Naive thymus-derived CD8-positive, alpha-beta T cell (primary cell): ENCODE measurements at regions of chr17 and their contacts with region 1.

Region 1: GRCh38 chr17:39209317-39210092 is 9.4 kb downstream of the RPL19 start:
- DNase-seq: peak; percentile 58 to 91 (median 74)
- ATAC-seq: peak; percentile 76 to 78
- H3K4me3 Mint-ChIP-seq: peak overlapping the region; percentile 46 to 75 (median 68)
- H3K27ac Mint-ChIP-seq: peak overlapping the region; percentile 67 to 95 (median 90)
- H3K4me1 Mint-ChIP-seq: peaks cover 19 to 40% (median 38%) of the 10 kb centered on the region in 4 donors
- H3K27me3 Mint-ChIP-seq: no peaks in the 10 kb centered on the region

Region 2: DNA sequence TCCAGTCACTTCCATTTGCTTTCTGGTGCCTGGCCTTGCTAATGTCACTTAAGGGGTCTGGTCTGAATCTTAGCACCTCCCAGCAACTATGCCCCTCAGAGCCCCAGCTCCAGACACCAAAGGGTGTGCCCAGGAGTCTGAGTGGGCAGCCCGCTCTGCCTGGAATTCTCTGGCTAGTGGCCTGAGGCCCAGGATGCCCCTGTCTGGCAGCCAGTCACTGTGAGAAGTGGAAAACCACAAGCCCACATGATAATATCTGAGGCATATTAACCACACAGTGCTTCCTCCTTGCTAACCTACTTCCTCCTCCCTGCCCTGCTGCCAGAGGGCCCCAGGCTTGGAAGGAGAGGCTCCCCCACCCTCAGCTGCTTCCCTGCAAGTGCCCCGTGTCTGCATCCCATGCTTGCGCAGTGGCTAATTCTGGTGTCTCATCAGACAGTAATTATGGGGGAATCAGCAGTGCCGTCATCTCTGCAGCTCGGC is 617.7 kb before region 1 on chr17:
- POLR2A ChIA-PET with region 1: no interaction called
- DNase-seq: no peak
- ATAC-seq: peak in 1 of 2 donors; percentile 33
- H3K4me3 Mint-ChIP-seq: peak overlapping the region in 5 of 10 donors; percentile 3 to 36 (median 29)
- H3K27ac Mint-ChIP-seq: peak overlapping the region in 1 of 10 donors; percentile 53
- H3K4me1 Mint-ChIP-seq: peaks cover 17 to 27% (median 22%) of the 10 kb centered on the region in 4 donors
- H3K27me3 Mint-ChIP-seq: peaks cover 49 to 93% (median 73%) of the 10 kb centered on the region in 5 donors

Region 3: DNA sequence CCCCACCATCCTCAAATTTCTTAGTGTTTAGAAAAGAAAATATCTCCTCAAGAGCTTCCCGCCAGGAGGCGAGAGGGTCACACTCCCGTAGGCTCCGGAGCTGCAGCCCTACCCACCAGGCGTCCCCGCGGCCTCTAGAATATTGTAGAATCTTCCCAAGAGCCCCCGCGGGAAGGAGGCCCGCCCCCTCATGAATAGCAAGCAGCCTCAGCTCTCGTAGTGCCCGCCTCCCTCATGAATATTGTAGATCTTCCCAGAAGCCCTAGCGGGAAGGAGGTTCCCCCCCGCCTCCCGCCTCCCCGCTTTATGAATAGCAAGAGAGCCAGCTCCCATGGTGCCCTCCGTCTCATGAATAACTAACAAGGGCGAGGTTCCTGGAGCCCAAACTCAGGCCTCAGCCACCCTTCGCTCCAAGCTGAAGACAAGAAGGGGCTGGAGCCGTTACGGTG is 242.2 kb before region 1 on chr17 and contains the start of gene FBXO47:
- POLR2A ChIA-PET with region 1: no interaction called
- DNase-seq: peak; percentile 53 to 94 (median 82)
- ATAC-seq: peak; percentile 98 to 99
- H3K4me3 Mint-ChIP-seq: peak within 1 kb of the TSS; percentile 73 to 89 (median 84)
- H3K27ac Mint-ChIP-seq: peak within 1 kb of the TSS; percentile 72 to 96 (median 90)
- H3K4me1 Mint-ChIP-seq: peaks cover 7 to 20% (median 12%) of the 10 kb centered on the region in 4 donors
- H3K27me3 Mint-ChIP-seq: no peaks in the 10 kb centered on the region
- polyA plus RNA-seq, gene FBXO47: not detected

Region 4: DNA sequence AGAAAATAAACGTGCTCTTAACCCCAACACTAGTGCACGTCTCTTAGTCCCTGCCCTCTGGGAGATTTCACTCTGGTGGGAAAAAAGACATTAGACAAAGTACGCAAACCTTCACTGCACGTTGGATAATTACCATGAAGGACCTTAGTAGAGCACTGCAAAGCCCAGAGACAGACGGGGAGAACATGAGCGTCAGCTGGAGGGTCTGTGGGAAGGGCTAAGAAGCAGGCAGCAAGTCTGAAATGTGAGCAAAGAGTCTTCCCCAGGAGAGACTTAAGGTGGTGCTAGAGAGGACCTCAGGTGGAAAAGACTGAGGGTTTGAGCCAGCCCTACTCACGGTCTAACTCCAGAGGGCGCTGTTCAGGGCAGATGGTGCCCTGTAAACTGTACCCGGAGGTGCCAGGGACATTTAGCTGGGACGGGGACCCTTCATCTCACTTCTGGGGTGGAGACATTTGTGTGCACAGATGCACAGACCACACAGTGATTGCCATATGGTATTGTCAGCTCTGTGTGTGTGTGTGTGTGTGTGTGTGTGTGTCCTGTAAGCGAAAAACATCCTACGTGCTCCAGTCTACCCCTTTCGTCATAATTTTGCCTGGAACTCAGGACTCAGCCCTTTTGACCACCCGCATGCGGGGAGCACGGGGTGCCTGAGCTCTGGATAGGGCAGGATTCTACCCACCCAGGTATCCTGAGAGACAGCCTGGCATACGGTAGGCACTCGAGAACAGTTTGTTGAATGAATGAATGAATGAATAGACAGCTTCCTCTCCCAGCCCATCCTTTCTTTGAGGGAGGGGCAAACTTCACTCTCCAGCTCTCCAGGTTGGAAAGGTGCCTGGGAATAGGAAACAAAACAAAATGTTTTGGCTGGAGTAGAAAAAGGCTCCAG is 26.3 kb after region 1 on chr17:
- POLR2A ChIA-PET with region 1: interaction called, 134 read pairs
- DNase-seq: peak in 5 of 10 donors; percentile 36 to 64 (median 62)
- ATAC-seq: peak; percentile 13 to 43
- H3K4me3 Mint-ChIP-seq: peak overlapping the region in 3 of 10 donors; percentile 5 to 59 (median 55)
- H3K27ac Mint-ChIP-seq: peak overlapping the region; percentile 5 to 94 (median 84)
- H3K4me1 Mint-ChIP-seq: peaks cover 29 to 53% (median 44%) of the 10 kb centered on the region in 4 donors
- H3K27me3 Mint-ChIP-seq: peaks cover 0 to 3% (median 0%) of the 10 kb centered on the region in 5 donors

Region 5: GRCh38 chr17:39244600-39245570 is 35.4 kb after region 1 on chr17:
- POLR2A ChIA-PET with region 1: interaction called, 134 read pairs
- DNase-seq: peak; percentile 70 to 92 (median 84)
- ATAC-seq: peak; percentile 89 to 92
- H3K4me3 Mint-ChIP-seq: peak overlapping the region in 8 of 10 donors; percentile 27 to 65 (median 53)
- H3K27ac Mint-ChIP-seq: peak overlapping the region in 6 of 10 donors; percentile 9 to 90 (median 68)
- H3K4me1 Mint-ChIP-seq: peaks cover 6 to 18% (median 15%) of the 10 kb centered on the region in 4 donors
- H3K27me3 Mint-ChIP-seq: no peaks in the 10 kb centered on the region

Region 6: GRCh38 chr17:39365242-39365641 is 155.7 kb after region 1 on chr17:
- POLR2A ChIA-PET with region 1: no interaction called
- DNase-seq: no peak
- ATAC-seq: no peak
- H3K4me3 Mint-ChIP-seq: no peak overlapping the region
- H3K27ac Mint-ChIP-seq: no peak overlapping the region
- H3K4me1 Mint-ChIP-seq: peaks cover 14 to 38% (median 21%) of the 10 kb centered on the region in 4 donors
- H3K27me3 Mint-ChIP-seq: peaks cover 0 to 1% (median 0%) of the 10 kb centered on the region in 5 donors